CD4-positive, alpha-beta T cell (primary cell): ENCODE measurements at regions of chr10 and their contacts with region 1.

Region 1: DNA sequence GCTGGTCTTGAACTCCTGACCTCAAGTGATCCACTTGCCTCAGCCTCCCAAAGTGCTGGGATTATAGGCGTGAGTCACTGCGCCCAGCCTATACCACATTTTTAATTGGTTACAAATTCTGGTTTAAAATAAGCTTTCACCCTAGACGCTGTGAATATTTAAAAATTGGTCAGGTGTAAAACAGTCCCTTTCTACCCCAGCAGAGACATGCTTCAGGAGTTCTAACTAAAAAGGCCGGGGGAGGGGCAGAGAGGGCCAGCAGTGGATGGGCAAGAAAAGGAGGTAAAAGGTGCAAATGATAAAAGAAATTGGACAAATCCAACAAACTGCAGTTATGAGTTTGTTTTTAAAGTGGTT is 70.0 kb downstream of the WAPL start:
- DNase-seq: no peak
- ATAC-seq: no peak
- H3K4me3 ChIP-seq: no peak overlapping the region
- H3K4me3 Mint-ChIP-seq: no peak overlapping the region
- H3K27ac ChIP-seq: no peak overlapping the region
- H3K27ac Mint-ChIP-seq: peak overlapping the region; percentile 53
- H3K4me1 ChIP-seq: peaks cover 3% of the 10 kb centered on the region
- H3K4me1 Mint-ChIP-seq: peaks cover 38% of the 10 kb centered on the region
- H3K27me3 ChIP-seq: no peaks in the 10 kb centered on the region
- H3K27me3 Mint-ChIP-seq: no peaks in the 10 kb centered on the region
- CTCF ChIP-seq: no peak

Region 2: GRCh38 chr10:86376852-86377796 is 74.5 kb before region 1 on chr10:
- CTCF ChIA-PET with region 1: no interaction called
- POLR2A ChIA-PET with region 1: no interaction called
- intact Hi-C with region 1: no loop called
- DNase-seq: peak; percentile 49 to 89 (median 78)
- ATAC-seq: peak; percentile 97
- H3K4me3 ChIP-seq: peak overlapping the region; percentile 26
- H3K4me3 Mint-ChIP-seq: no peak overlapping the region
- H3K27ac ChIP-seq: no peak overlapping the region
- H3K27ac Mint-ChIP-seq: no peak overlapping the region
- H3K4me1 ChIP-seq: peaks cover 12% of the 10 kb centered on the region
- H3K4me1 Mint-ChIP-seq: no peaks in the 10 kb centered on the region
- H3K27me3 ChIP-seq: peaks cover 20 to 47% of the 10 kb centered on the region in 2 experiments
- H3K27me3 Mint-ChIP-seq: peaks cover 66% of the 10 kb centered on the region
- CTCF ChIP-seq: peak; percentile 96

Region 3: GRCh38 chr10:86512137-86512536 is 60.6 kb after region 1 on chr10:
- CTCF ChIA-PET with region 1: no interaction called
- POLR2A ChIA-PET with region 1: no interaction called
- intact Hi-C with region 1: loop called in 1 of 2 experiments (anchors 10 kb)
- DNase-seq: no peak
- ATAC-seq: no peak
- H3K4me3 ChIP-seq: no peak overlapping the region
- H3K4me3 Mint-ChIP-seq: peak overlapping the region; percentile 47
- H3K27ac ChIP-seq: no peak overlapping the region
- H3K27ac Mint-ChIP-seq: peak overlapping the region; percentile 50
- H3K4me1 ChIP-seq: peaks cover 51% of the 10 kb centered on the region
- H3K4me1 Mint-ChIP-seq: peaks cover 55% of the 10 kb centered on the region
- H3K27me3 ChIP-seq: no peaks in the 10 kb centered on the region
- H3K27me3 Mint-ChIP-seq: no peaks in the 10 kb centered on the region
- CTCF ChIP-seq: no peak